Breast epithelium (tissue), 4 donors: ENCODE measurements at regions of chr7 and their contacts with region 1.

Region 1: DNA sequence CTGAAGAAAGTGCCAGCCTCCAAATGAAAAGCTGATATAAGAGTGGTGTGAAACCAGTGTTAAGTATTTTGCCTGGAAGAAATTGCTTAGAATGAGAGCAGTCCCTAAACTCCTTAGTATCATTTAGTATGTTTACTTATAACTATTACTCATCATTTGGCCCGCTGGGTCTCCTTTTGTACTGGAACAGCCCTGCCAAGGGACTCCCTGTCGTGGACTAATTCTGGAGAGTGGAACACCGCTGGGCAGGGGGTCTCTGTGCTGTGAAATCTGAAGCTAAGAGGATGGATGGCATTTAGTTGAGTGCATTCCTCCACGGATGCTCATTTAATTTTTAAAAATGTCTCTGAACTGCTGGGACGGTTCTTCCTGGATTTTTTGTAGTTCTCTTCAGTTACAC is 889.9 kb upstream of the C7orf33 start:
- DNase-seq: no peak
- H3K4me3 ChIP-seq: no peak overlapping the region
- H3K27ac ChIP-seq: no peak overlapping the region
- H3K4me1 ChIP-seq: no peaks in the 10 kb centered on the region
- H3K27me3 ChIP-seq: no peaks in the 10 kb centered on the region
- CTCF ChIP-seq: no peak
- POLR2A ChIP-seq: no peak

Region 2: DNA sequence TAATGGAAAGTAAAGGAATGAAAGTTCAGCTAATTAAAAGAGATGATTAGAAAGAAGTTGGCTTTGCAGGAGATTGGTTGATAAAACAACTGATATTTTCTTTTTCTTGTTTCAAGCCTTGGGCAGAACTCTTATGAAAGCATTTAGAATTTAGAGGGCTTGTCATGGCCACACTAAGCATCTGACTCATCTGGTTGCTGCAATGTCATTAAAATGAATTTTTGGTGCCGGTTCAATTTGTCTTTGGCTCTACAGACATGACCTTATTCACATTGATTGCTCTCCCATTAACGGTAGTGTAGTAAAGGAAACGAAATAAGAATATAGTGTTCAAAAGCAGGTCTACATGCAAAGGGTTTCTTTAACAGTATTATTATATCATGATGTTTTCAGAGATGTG is 122.5 kb before region 1 on chr7:
- intact Hi-C with region 1: loop called (anchors 5 kb)
- DNase-seq: no peak
- H3K4me3 ChIP-seq: no peak overlapping the region
- H3K27ac ChIP-seq: no peak overlapping the region
- H3K4me1 ChIP-seq: no peaks in the 10 kb centered on the region
- H3K27me3 ChIP-seq: no peaks in the 10 kb centered on the region
- CTCF ChIP-seq: no peak
- POLR2A ChIP-seq: no peak